WTC11 (cell line): ENCODE measurements at regions of chr5 and their contacts with region 1.

Region 1: DNA sequence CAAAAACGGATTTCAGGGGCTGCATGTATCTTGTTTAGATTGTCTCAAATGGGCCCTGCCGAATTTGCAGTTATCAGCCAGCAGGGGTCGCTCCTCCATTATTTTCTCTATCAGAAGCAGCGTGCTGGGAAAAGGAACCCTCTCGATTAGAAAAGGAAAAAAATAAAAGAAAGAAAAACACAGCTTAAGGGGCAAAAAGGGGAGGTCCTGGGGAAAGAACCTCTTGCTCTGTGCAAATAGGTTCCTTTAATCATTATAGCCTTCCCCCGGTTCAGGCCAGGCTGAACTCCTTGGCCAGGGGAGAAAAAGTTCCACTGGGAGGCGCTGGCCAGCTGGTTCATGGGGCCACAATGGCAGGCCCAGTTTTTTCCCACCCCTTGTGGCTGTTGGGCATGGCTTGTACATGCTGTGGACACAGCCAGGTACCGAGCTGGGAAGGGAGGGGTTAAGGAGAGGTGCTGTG is 25.0 kb upstream of the CAPSL start:
- DNase-seq: peak; percentile 61
- ATAC-seq: peak; percentile 92
- H3K4me3 Mint-ChIP-seq: no peak overlapping the region
- H3K27ac Mint-ChIP-seq: no peak overlapping the region
- H3K4me1 Mint-ChIP-seq: no peaks in the 10 kb centered on the region
- H3K27me3 Mint-ChIP-seq: peaks cover 17% of the 10 kb centered on the region
- CTCF ChIP-seq: peak; percentile 81

Region 2: GRCh38 chr5:35876921-35877320 is 86.5 kb before region 1 on chr5:
- CTCF ChIA-PET with region 1: no interaction called
- POLR2A ChIA-PET with region 1: no interaction called
- DNase-seq: no peak
- ATAC-seq: no peak
- H3K4me3 Mint-ChIP-seq: no peak overlapping the region
- H3K27ac Mint-ChIP-seq: no peak overlapping the region
- H3K4me1 Mint-ChIP-seq: no peaks in the 10 kb centered on the region
- H3K27me3 Mint-ChIP-seq: no peaks in the 10 kb centered on the region; the same call in 1 of the 2 replicates
- CTCF ChIP-seq: no peak

Region 3: GRCh38 chr5:35990941-35991611 is 27.7 kb after region 1 on chr5 and contains the start of gene UGT3A1:
- CTCF ChIA-PET with region 1: interaction called, 15 read pairs
- POLR2A ChIA-PET with region 1: no interaction called
- DNase-seq: peak; percentile 59
- ATAC-seq: peak; percentile 95
- H3K4me3 Mint-ChIP-seq: peak within 1 kb of the TSS; percentile 87
- H3K27ac Mint-ChIP-seq: no peak within 1 kb of the TSS
- H3K4me1 Mint-ChIP-seq: peaks cover 13% of the 10 kb centered on the region
- H3K27me3 Mint-ChIP-seq: peaks cover 39% of the 10 kb centered on the region
- CTCF ChIP-seq: no peak
- total RNA-seq, gene UGT3A1: 2.0 to 2.7 TPM (median 2.1 TPM) in 3 replicates

Region 4: GRCh38 chr5:36041538-36041846 is 78.1 kb after region 1 on chr5:
- CTCF ChIA-PET with region 1: interaction called, 17 read pairs
- POLR2A ChIA-PET with region 1: no interaction called
- DNase-seq: peak; percentile 42
- ATAC-seq: peak; percentile 92
- H3K4me3 Mint-ChIP-seq: no peak overlapping the region
- H3K27ac Mint-ChIP-seq: peak overlapping the region; percentile 6; the same call in 1 of the 2 replicates
- H3K4me1 Mint-ChIP-seq: peaks cover 18% of the 10 kb centered on the region
- H3K27me3 Mint-ChIP-seq: no peaks in the 10 kb centered on the region
- CTCF ChIP-seq: no peak